SK-MEL-5 (cell line): ENCODE measurements at regions of chr17 and their contacts with region 1.

Region 1: GRCh38 chr17:69235338-69235930 is 6.8 kb upstream of the ABCA10 start:
- DNase-seq: peak; percentile 98

Region 2: GRCh38 chr17:68777243-68777855 is 458.1 kb before region 1 on chr17:
- in situ Hi-C with region 1: loop called (anchors 5 kb)
- DNase-seq: peak; percentile 100

Region 3: DNA sequence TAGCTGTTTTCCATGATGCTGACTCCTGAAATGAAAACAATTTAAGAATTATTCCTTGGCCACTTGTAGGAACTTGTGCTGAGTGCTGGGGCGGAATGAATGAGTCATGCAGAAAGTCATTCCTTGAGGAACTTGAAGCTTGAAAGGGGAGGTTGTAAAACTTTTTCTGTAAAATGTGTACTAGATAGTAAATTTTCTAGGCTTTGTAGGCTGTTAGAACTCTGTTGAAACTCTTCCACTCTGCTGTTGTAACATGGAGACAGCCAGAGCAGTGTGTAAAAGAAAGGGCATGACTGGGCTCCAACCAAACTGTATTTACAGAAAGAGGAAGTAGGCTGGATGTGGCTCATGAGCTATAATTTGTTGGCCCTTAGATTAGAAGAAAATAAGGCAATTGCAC is 326.4 kb before region 1 on chr17:
- in situ Hi-C with region 1: loop called (anchors 25 kb)
- DNase-seq: peak; percentile 83

Region 4: DNA sequence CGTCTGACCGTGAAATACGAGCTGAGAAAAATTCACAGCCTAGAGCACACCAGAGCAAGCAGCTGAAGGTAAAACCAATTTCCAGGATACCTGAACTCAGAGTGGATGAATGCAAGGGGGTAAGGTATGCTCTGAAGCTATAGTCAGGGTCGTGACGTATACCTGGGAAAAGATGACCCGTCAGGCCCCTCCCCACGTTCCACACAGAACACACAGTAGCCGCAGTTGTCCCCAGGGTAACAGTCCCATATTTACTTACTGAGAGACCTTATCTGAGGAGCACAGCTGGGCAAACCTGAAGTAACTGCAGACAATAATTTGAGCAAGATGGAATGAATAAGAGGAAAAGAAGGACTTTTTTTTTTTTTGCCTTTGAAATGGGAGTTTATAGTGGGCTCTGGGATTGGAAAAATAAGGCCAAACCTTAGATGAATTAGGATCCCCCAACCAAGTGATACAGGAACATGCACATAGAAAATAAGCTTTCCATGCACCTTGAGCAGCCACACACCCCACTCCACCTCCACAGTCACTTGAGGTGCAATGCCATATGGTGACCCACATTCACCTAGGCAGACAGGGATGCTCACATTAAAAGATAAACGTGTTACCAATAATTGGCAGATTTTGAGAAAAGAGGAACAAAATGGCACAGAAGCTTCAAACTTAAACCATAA is 131.7 kb before region 1 on chr17:
- in situ Hi-C with region 1: no loop called
- DNase-seq: no peak

Region 5: GRCh38 chr17:69130627-69131296 is 104.7 kb before region 1 on chr17:
- in situ Hi-C with region 1: no loop called
- DNase-seq: no peak

Region 6: DNA sequence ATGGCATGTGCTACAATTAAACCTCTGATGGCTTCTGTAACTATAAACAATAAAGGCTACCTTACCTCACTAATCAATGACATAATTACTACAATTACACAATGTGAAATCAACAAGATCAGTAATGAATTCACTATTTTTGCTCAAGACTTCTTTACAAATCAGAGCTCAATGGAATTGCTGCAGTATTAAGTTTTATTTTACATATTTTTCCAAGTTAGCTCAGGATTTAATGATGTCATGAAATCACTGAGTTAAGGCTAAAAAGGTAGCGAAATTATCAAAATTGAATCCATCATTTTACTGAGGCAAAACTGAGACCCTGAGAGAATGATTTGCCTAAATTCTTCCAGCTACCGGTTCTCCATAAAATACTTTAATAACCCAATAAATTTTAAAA is 69.7 kb after region 1 on chr17:
- in situ Hi-C with region 1: no loop called
- DNase-seq: no peak

Region 7: GRCh38 chr17:69357701-69358100 is 122.3 kb after region 1 on chr17:
- in situ Hi-C with region 1: no loop called
- DNase-seq: peak; percentile 69